ENCODE measurements at regions of chr1 and their contacts with region 1.

Region 1: DNA sequence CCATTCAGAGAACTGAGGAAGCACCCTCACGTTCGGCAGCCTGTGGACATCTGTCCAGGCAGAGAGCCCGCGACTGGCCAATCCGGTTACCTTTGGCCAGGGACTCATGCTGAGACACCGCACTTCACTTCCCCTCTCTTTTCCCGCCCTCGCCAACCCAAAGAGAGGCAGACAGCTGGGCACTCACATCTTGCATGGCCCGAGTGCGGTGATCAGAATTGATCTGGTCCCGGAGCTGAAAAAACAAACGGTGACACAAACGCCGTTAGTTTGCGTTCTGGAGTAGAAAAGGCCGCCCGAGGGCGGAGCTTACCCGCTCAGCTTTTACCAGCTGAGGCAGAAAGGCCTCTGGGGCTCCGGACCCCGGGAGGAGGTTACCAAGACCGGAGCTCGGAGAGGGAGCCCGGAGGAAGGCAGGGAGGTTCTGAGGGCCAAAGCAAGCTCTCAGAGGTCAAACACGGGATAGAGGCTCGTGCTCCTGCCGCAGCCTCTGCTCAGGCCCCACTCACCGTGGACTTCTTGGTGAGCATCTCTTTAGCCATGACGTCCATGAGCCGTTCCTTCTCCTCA is 376 bp downstream of the SF3A3 start:
- DNase-seq: peak in 1 of 2 experiments; percentile 26
- H3K4me3 ChIP-seq: peak overlapping the region; percentile 63
- H3K4me3 Mint-ChIP-seq: peak overlapping the region; percentile 90
- H3K27ac Mint-ChIP-seq: peak overlapping the region; percentile 94
- H3K4me1 ChIP-seq: peaks cover 9% of the 10 kb centered on the region; the same call in 1 of the 2 replicates
- H3K4me1 Mint-ChIP-seq: peaks cover 5% of the 10 kb centered on the region
- H3K27me3 ChIP-seq: no peaks in the 10 kb centered on the region
- H3K27me3 Mint-ChIP-seq: no peaks in the 10 kb centered on the region
- CTCF ChIP-seq: no peak

Region 2: GRCh38 chr1:37875834-37876233 is 113.6 kb before region 1 on chr1:
- CTCF ChIA-PET with region 1: no interaction called
- POLR2A ChIA-PET with region 1: no interaction called
- intact Hi-C with region 1: loop called (anchors 5 kb)
- DNase-seq: no peak
- H3K4me3 ChIP-seq: no peak overlapping the region
- H3K4me3 Mint-ChIP-seq: no peak overlapping the region
- H3K27ac Mint-ChIP-seq: no peak overlapping the region
- H3K4me1 ChIP-seq: peaks cover 27% of the 10 kb centered on the region
- H3K4me1 Mint-ChIP-seq: no peaks in the 10 kb centered on the region
- H3K27me3 ChIP-seq: no peaks in the 10 kb centered on the region
- H3K27me3 Mint-ChIP-seq: no peaks in the 10 kb centered on the region
- CTCF ChIP-seq: no peak

Region 3: DNA sequence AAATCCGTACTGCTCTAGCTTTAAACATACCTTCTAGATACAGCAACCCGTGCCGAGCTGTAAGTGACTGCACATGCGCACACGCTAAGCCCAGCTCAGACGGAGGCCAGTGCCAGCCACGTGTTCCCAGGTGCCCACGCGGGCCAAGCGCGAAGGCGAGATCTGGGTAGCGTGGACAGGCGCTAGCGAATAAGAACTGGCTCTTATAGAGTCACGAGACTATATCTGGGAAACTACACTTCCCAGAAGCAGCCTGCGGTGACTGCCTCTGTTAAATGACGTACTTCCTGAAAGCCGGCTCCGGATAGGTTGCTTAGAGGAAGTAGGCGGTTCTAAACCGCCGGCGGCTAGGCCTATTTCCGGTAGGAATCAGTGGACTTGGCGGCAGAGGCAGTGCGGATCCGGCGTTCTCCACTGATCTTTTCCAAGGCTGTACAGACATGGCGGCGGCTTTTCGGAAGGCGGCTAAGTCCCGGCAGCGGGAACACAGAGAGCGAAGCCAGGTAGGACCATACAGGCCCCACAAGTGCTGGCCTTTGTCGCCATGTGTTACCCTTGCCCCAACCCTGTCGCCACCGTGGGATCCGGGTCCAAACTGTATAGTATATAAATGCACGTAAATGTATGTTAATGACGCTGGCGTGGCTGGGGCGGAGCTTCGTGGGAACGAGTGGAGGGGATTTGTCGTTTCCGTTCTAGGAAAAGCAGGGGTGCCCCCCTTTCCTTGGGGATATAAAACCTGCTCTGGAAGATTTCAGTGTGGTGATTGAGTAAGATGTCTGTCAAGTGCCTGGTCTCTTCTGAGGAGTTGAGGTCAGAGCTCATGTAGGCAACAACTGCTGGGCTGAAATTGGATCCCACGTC is 23.1 kb after region 1 on chr1 and contains the start of gene UTP11:
- CTCF ChIA-PET with region 1: interaction called, 3 read pairs
- POLR2A ChIA-PET with region 1: interaction called, 9 read pairs
- intact Hi-C with region 1: loop called (anchors 2 kb)
- DNase-seq: peak; percentile 92 to 96
- H3K4me3 ChIP-seq: peak within 1 kb of the TSS; percentile 63
- H3K4me3 Mint-ChIP-seq: peak within 1 kb of the TSS; percentile 97
- H3K27ac Mint-ChIP-seq: peak within 1 kb of the TSS; percentile 97
- H3K4me1 ChIP-seq: no peaks in the 10 kb centered on the region; the same call in 1 of the 2 replicates
- H3K4me1 Mint-ChIP-seq: no peaks in the 10 kb centered on the region
- H3K27me3 ChIP-seq: no peaks in the 10 kb centered on the region
- H3K27me3 Mint-ChIP-seq: no peaks in the 10 kb centered on the region
- CTCF ChIP-seq: no peak
- total RNA-seq, gene UTP11: 29.1 and 33.2 TPM in 2 replicates

Region 4: GRCh38 chr1:38018864-38019343 is 29.5 kb after region 1 on chr1:
- CTCF ChIA-PET with region 1: no interaction called
- POLR2A ChIA-PET with region 1: no interaction called
- intact Hi-C with region 1: loop called (anchors 1 kb)
- DNase-seq: no peak
- H3K4me3 ChIP-seq: no peak overlapping the region
- H3K4me3 Mint-ChIP-seq: no peak overlapping the region
- H3K27ac Mint-ChIP-seq: no peak overlapping the region
- H3K4me1 ChIP-seq: no peaks in the 10 kb centered on the region
- H3K4me1 Mint-ChIP-seq: no peaks in the 10 kb centered on the region
- H3K27me3 ChIP-seq: no peaks in the 10 kb centered on the region
- H3K27me3 Mint-ChIP-seq: no peaks in the 10 kb centered on the region
- CTCF ChIP-seq: peak; percentile 31 to 33